ENCODE measurements at regions of chr6 and their contacts with region 1.

Region 1: DNA sequence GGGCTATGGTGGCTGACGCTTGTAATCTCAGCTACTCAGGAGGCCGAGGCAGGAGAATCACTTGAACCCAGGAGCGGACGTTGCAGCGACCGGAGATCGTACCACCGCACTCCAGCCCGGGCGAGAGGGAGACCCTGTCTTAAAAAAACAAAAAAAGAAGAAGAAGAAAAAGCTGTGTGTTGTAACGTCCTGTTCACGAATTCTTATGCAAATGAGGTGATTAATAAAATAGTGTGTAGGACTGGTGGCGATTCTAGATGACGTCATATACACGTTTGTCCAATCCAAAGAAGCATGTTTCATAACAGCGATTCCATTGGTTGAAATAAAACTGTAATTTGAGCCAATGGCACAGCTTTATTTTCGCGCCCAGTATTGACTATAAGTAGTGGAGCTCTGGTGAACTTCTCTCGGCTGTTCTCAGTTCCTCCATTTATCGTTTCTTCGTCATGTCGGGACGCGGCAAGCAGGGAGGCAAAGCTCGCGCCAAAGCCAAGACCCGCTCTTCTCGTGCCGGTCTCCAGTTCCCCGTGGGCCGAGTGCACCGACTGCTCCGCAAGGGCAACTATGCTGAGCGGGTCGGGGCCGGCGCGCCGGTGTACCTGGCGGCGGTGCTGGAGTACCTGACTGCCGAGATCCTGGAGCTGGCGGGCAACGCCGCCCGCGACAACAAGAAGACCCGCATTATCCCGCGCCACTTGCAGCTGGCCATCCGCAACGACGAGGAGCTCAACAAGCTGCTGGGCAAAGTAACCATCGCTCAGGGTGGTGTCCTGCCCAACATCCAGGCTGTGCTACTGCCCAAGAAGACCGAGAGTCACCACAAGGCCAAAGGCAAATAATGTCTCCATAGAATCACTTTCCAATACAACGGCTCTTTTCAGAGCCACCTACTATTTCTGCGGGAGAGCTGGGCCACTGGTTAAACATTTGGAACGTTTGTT is 47.0 kb downstream of the OR2B2 start:
- DNase-seq: peak; percentile 91
- ATAC-seq: peak; percentile 63
- H3K4me3 Mint-ChIP-seq: peak overlapping the region; percentile 89
- H3K27ac Mint-ChIP-seq: peak overlapping the region; percentile 100
- H3K4me1 Mint-ChIP-seq: peaks cover 51% of the 10 kb centered on the region
- H3K27me3 Mint-ChIP-seq: peaks cover 20% of the 10 kb centered on the region

Region 2: DNA sequence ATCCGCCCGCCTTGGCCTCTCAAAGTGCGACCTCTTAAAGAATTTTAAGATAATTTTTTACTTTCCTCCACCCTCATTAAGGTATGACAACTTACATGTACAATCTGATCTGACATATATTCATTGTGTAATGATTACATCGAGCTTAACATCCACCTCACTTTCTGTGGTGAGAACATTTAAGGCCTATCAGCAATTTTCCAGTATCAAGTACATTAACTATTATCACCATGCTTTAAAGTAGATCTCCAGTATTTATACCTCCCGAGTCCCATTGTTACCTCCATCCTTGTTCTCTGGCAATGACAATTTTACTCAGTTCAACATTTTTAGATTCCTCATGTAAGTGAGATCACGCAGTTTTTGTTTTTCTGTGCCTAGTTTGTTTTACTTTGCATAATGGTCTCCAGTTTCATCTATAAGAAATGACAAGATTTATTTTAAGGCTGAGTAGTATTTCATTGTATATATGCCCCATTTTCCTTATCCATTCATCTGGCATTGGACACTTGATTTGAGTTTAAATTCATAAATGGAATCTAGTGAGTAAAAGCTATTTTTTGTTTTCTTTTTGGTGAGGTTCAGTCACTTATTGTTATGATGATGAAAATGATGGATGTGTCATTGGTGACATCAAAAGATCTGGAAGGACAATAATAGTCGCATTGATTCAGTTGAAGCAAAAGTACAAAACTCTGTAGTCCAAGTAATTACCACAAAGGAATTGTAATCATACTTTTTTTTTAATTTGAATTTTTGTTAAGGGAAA is 40.0 kb before region 1 on chr6:
- CTCF ChIA-PET with region 1: interaction called, 15 read pairs
- DNase-seq: no peak
- ATAC-seq: peak; percentile 5
- H3K4me3 Mint-ChIP-seq: peak overlapping the region; percentile 78
- H3K27ac Mint-ChIP-seq: peak overlapping the region; percentile 100
- H3K4me1 Mint-ChIP-seq: peaks cover 39% of the 10 kb centered on the region
- H3K27me3 Mint-ChIP-seq: peaks cover 3% of the 10 kb centered on the region

Region 3: DNA sequence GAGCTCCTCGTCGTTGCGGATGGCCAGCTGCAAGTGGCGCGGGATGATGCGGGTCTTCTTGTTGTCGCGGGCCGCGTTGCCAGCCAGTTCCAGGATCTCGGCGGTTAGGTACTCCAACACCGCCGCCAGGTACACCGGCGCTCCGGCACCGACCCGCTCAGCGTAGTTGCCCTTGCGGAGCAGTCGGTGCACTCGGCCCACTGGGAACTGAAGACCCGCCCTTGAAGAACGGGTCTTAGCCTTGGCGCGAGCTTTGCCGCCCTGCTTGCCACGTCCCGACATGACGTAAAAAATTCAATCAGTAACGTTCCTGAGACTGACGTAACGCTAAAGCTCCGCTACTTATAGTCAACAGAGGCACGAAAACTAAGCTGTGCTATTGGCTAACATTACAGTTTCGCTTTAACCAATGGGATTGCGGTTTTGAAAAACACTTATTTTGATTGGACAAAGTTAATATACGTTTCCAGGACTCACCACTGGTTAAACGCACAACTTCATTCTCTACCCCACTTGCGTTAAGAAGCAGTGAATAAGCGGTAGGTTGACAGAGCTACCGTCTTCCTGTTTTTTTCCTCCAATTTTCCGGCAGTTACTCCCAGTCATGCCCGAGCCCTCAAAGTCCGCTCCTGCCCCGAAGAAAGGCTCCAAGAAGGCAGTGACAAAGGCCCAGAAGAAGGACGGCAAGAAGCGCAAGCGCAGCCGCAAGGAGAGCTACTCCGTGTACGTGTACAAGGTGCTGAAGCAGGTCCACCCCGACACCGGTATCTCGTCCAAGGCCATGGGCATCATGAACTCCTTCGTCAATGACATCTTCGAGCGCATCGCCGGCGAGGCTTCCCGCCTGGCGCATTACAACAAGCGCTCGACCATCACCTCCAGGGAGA is 26.9 kb before region 1 on chr6:
- CTCF ChIA-PET with region 1: interaction called, 81 read pairs
- DNase-seq: peak; percentile 94
- ATAC-seq: peak; percentile 75
- H3K4me3 Mint-ChIP-seq: no peak overlapping the region
- H3K27ac Mint-ChIP-seq: no peak overlapping the region
- H3K4me1 Mint-ChIP-seq: peaks cover 33% of the 10 kb centered on the region
- H3K27me3 Mint-ChIP-seq: no peaks in the 10 kb centered on the region

Region 4: DNA sequence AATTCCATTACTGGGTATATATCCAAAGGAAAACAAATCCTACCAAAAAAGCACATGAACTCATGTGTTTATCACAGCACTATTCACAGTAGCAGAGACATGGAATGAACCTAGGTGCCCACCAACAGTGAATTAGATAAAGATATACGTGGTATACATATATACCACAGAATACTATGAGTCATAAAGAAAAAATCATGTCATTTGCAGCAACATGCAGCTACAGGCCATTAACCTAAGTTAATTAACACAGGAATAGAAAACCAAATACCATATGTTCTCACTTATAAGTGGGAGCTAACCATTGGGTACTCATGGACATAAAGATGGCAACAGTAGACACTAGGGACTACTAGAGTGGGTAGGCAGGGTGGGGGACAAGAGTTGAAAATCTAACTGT is 42.8 kb after region 1 on chr6:
- CTCF ChIA-PET with region 1: no interaction called
- DNase-seq: no peak
- ATAC-seq: peak; percentile 20
- H3K4me3 Mint-ChIP-seq: no peak overlapping the region
- H3K27ac Mint-ChIP-seq: no peak overlapping the region
- H3K4me1 Mint-ChIP-seq: peaks cover 7% of the 10 kb centered on the region
- H3K27me3 Mint-ChIP-seq: peaks cover 31% of the 10 kb centered on the region

Measured in activated CD8-positive, alpha-beta memory T cell treated with anti-CD3 and anti-CD28 coated beads, Interleukin-2, amount 10 ng/mL, durations not matched to agents 7 days and 5 days (primary cell).